GM23248 (cell line): ENCODE measurements at regions of chr1 and their contacts with region 1.

Region 1: GRCh38 chr1:75632350-75632949 is 21.5 kb upstream of the SLC44A5 start:
- DNase-seq: peak; percentile 56
- H3K4me3 ChIP-seq: no peak overlapping the region
- H3K27ac ChIP-seq: no peak overlapping the region
- H3K4me1 ChIP-seq: no peaks in the 10 kb centered on the region
- H3K27me3 ChIP-seq: 0 out of 2 replicates have a peak, but pooled peaks cover 4% of the 10 kb centered on the region

Region 2: DNA sequence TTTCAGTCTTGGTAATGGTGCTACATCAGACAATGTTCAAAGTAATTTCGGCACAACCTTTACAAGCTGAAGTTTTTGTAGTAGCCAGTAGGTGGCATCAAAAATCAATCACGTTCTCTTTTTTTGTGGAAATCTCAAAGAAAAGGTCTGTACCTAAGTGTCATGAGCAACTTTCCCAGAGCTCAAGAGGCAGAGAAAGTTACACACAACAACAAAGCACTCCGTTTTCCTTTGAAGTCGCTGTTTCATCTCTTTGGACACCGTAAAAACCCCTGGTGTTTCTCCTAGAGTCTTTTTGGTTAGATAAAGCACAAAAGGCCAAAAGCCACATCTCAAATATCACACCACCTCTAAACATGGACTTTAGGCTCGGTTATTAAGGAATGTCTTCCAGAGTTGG is 366.7 kb before region 1 on chr1:
- in situ Hi-C with region 1: loop called (anchors 25 kb)
- DNase-seq: peak; percentile 54
- H3K4me3 ChIP-seq: no peak overlapping the region
- H3K27ac ChIP-seq: no peak overlapping the region
- H3K4me1 ChIP-seq: no peaks in the 10 kb centered on the region
- H3K27me3 ChIP-seq: no peaks in the 10 kb centered on the region